Endothelial cell of umbilical vein (primary cell): ENCODE measurements at regions of chr11 and their contacts with region 1.

Region 1: GRCh38 chr11:63916837-63917691 is at the start of gene RCOR2:
- DNase-seq: peak; percentile 52
- H3K4me3 ChIP-seq: peak within 1 kb of the TSS; percentile 25 to 34 (median 32)
- H3K27ac ChIP-seq: no peak within 1 kb of the TSS
- H3K4me1 ChIP-seq: peaks cover 7% of the 10 kb centered on the region
- H3K27me3 ChIP-seq: peaks cover 0 to 4% of the 10 kb centered on the region in 2 experiments
- CTCF ChIP-seq: no peak
- POLR2A ChIP-seq: no peak
- total RNA-seq, gene RCOR2: 0.13 and 1.7 TPM in 2 replicates

Region 2: GRCh38 chr11:63906585-63906984 is 10.5 kb before region 1 on chr11:
- CTCF ChIA-PET with region 1: interaction called, 13 read pairs
- POLR2A ChIA-PET with region 1: no interaction called
- dilution Hi-C with region 1: no loop called
- intact Hi-C with region 1: no loop called
- DNase-seq: no peak
- H3K4me3 ChIP-seq: no peak overlapping the region
- H3K27ac ChIP-seq: no peak overlapping the region
- H3K4me1 ChIP-seq: no peaks in the 10 kb centered on the region
- H3K27me3 ChIP-seq: no peaks in the 10 kb centered on the region
- CTCF ChIP-seq: peak in 1 of 2 donors; percentile 20
- POLR2A ChIP-seq: no peak

Region 3: GRCh38 chr11:63933459-63933858 is 16.4 kb after region 1 on chr11:
- CTCF ChIA-PET with region 1: interaction called, 11 read pairs
- POLR2A ChIA-PET with region 1: no interaction called
- dilution Hi-C with region 1: no loop called
- intact Hi-C with region 1: loop called (anchors 2 kb)
- DNase-seq: no peak
- H3K4me3 ChIP-seq: no peak overlapping the region
- H3K27ac ChIP-seq: no peak overlapping the region
- H3K4me1 ChIP-seq: peaks cover 6% of the 10 kb centered on the region
- H3K27me3 ChIP-seq: peaks cover 1 to 2% of the 10 kb centered on the region in 2 experiments
- CTCF ChIP-seq: no peak
- POLR2A ChIP-seq: no peak

Region 4: GRCh38 chr11:63938479-63939396 is 21.7 kb after region 1 on chr11 and contains the start of gene NAA40:
- CTCF ChIA-PET with region 1: interaction called, 11 read pairs
- POLR2A ChIA-PET with region 1: no interaction called
- dilution Hi-C with region 1: no loop called
- intact Hi-C with region 1: loop called (anchors 2 kb)
- DNase-seq: peak; percentile 96
- H3K4me3 ChIP-seq: peak within 1 kb of the TSS; percentile 73 to 98 (median 78)
- H3K27ac ChIP-seq: peak within 1 kb of the TSS; percentile 43
- H3K4me1 ChIP-seq: peaks cover 11% of the 10 kb centered on the region
- H3K27me3 ChIP-seq: no peaks in the 10 kb centered on the region
- CTCF ChIP-seq: peak in 1 of 2 donors; percentile 14
- POLR2A ChIP-seq: peak; percentile 63
- total RNA-seq, gene NAA40: 30.9 and 32.3 TPM in 2 replicates

Region 5: DNA sequence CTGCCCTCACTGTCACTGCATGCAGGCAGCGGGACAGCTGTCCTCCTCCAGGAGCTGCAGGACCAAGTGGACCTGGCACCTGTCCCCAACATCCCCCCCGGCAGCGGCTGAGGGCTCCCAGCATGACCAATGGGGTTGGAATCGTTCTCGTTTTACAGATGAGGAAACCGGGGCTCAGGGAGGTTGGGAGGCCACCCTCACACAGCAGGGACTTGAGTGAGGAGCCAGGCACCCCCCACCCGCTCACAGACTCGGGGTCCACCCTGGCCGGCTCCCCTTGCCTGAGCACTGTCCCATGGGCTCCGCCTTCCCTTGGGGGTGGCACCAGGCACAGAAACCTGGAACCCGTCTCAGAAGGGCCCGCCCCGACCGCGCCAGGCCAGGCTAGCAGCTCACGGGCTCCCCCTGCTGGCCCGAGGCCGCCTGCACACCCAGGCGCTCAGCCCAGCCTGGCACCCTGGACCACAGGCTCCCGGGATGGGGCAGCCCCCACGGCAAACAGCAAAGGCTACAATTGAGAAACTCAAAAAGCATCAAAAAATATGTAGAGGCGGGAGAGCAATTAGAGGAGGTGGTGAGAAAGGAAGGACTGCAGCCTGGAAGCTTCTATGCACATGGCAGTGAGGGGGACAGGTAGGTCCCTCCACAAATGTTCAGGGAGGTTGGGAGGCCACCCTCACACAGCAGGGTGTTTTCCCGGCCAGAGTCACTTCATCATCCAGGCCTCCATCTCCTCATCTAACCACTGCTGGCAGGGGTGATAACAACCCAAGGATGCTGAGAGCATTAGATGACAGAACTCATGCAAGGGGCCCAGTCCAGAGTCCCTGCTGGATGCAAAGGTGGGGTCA is 236.0 kb after region 1 on chr11:
- CTCF ChIA-PET with region 1: interaction called, 3 read pairs
- POLR2A ChIA-PET with region 1: no interaction called
- dilution Hi-C with region 1: no loop called
- intact Hi-C with region 1: loop called (anchors 5 kb)
- DNase-seq: peak; percentile 42
- H3K4me3 ChIP-seq: no peak overlapping the region
- H3K27ac ChIP-seq: no peak overlapping the region
- H3K4me1 ChIP-seq: no peaks in the 10 kb centered on the region
- H3K27me3 ChIP-seq: no peaks in the 10 kb centered on the region
- CTCF ChIP-seq: peak; percentile 99 to 100
- POLR2A ChIP-seq: no peak